Left colon (tissue), 2 donors: ENCODE measurements at regions of chr1 and their contacts with region 1.

Region 1: GRCh38 chr1:236619398-236619797 is 15.1 kb upstream of the HEATR1 start:
- DNase-seq: no peak
- ATAC-seq: no peak

Region 2: DNA sequence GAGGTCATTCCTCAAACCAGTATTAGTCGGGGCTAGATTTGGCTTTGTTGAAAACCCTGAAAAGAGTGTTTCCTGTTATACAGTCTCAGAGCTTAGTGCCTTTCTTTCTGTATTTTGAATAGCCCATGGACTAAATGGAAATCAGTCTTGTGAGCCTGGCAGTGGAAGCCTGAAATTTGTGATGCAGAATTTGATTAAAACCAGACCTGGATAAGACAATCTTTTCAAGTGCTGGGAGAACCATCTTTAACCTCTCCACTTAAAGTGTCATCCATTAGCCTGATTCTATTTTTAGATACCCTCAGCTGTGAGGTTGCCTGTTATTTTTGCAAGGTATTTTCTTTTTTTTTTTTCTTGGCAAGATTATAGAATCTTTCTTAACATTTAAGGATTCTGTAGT is 86.4 kb after region 1 on chr1:
- intact Hi-C with region 1: no loop called
- DNase-seq: no peak
- ATAC-seq: no peak

Region 3: DNA sequence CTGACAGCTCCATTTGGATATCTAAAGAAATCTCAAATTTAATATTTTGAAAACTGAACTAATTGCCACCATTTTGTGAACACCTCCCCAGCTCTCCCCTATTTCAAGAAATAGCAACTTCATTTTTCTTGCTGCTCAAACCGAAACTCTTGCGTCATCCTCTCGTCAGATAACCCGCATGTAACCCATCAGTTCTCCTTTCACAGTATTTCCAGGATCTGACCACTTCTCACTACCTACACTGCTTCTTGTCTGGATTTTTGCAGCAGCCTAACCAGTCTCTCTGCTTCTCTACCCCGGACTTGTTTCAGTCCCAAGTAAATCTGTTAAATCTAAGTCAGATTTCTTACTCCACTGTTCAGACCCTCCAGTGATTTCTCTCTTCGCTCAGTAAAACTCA is 251.3 kb after region 1 on chr1:
- intact Hi-C with region 1: loop called in 1 of 2 experiments (anchors 10 kb)
- DNase-seq: no peak
- ATAC-seq: no peak